ENCODE measurements at regions of chr1 and their contacts with region 1.

Region 1: DNA sequence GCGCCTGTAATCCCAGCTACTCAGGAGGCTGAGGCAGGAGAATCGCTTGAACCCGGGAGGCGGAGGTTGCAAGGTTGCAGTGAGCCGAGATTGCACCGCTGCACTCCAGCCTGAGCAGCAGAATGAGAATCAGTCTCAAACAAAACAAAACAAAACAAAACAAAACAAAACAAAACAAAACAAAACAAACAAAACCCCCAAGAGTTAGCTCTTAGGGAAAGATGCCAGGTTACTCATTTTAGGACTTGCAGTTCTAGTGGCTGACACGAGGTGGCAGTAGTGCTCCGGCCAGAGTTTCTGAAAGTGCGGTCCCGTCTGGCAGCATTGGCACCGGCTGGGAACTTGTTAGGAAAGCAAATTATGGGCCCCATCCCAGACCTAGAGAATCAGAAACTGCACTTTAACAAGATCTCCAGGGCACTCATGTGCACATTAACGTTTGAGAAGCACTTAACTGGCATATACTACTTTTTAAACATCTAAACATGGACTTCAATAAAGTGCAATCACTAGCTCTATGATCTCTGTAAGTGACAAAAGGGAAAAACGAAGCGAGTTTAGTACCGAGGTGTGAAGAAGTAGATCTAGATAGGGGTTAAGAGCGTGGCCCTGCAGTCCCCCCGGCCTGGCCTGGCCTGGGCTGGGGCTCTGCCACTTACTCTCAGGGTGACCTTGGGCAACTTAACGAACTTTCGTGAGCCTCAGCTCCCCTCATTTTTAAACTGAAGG is 41.9 kb upstream of the TNFRSF1B start:
- DNase-seq: peak; percentile 41 to 91
- H3K4me3 ChIP-seq: no peak overlapping the region
- H3K27ac ChIP-seq: no peak overlapping the region
- H3K4me1 ChIP-seq: no peaks in the 10 kb centered on the region
- H3K27me3 ChIP-seq: no peaks in the 10 kb centered on the region
- CTCF ChIP-seq: peak; percentile 78 to 97 (median 89)
- EP300 ChIP-seq: no peak
- POLR2A ChIP-seq: no peak
- RAD21 ChIP-seq: peak; percentile 96 to 97

Region 2: GRCh38 chr1:11581451-11581991 is 543.3 kb before region 1 on chr1:
- CTCF ChIA-PET with region 1: no interaction called
- POLR2A ChIA-PET with region 1: no interaction called
- DNase-seq: no peak
- H3K4me3 ChIP-seq: no peak overlapping the region
- H3K27ac ChIP-seq: no peak overlapping the region
- H3K4me1 ChIP-seq: no peaks in the 10 kb centered on the region
- H3K27me3 ChIP-seq: no peaks in the 10 kb centered on the region
- CTCF ChIP-seq: no peak
- EP300 ChIP-seq: no peak
- POLR2A ChIP-seq: no peak
- RAD21 ChIP-seq: no peak

Region 3: DNA sequence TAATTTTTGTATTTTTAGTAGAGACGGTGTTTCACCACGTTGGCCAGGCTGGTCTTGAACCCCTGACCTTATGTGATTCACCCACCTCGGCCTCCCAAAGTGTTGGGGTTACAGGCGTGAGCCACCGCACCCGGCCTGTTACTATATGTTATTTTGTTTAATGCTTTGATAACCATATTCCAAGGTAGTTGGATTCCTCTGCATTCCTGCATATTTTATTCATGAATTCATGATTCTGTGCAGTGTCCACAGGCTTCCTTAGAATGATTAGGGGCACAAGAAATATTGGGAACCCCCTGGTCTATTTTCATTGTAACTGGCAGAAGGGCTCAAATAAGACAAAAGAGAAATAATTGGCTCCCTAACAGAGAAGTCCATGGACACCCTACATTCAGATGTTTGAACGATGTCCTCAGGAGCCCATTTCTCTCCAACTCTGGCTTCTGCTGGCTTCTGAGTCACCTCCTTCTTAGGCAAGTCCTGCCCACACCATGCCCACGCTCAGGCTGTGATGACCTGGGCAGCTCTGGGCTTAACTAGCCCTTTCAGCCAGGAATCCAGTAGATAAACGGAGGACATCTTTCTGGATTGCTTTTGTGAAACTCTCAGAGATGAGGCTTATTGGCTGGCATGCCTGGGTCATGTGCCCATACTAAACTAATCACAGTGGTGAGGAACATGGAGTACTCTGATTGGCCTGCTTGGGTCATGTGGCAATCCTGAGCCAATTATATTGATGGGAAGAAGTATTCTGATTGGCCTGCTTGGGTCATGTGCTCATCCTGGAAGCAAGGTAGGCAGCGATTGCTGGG is 29.2 kb before region 1 on chr1:
- CTCF ChIA-PET with region 1: interaction called, 10 read pairs
- POLR2A ChIA-PET with region 1: no interaction called
- DNase-seq: no peak
- H3K4me3 ChIP-seq: no peak overlapping the region
- H3K27ac ChIP-seq: no peak overlapping the region
- H3K4me1 ChIP-seq: no peaks in the 10 kb centered on the region
- H3K27me3 ChIP-seq: no peaks in the 10 kb centered on the region
- CTCF ChIP-seq: no peak
- EP300 ChIP-seq: no peak
- POLR2A ChIP-seq: no peak
- RAD21 ChIP-seq: no peak

Region 4: GRCh38 chr1:12135612-12136011 is 10.8 kb after region 1 on chr1:
- CTCF ChIA-PET with region 1: interaction called, 66 read pairs
- POLR2A ChIA-PET with region 1: interaction called, 5 read pairs
- DNase-seq: no peak
- H3K4me3 ChIP-seq: no peak overlapping the region
- H3K27ac ChIP-seq: no peak overlapping the region
- H3K4me1 ChIP-seq: no peaks in the 10 kb centered on the region; a peak in 1 of 7 replicates
- H3K27me3 ChIP-seq: no peaks in the 10 kb centered on the region
- CTCF ChIP-seq: no peak
- EP300 ChIP-seq: no peak
- POLR2A ChIP-seq: no peak
- RAD21 ChIP-seq: no peak

Region 5: GRCh38 chr1:12161662-12162458 is 37.0 kb after region 1 on chr1:
- CTCF ChIA-PET with region 1: interaction called, 23 read pairs
- POLR2A ChIA-PET with region 1: interaction called, 3 read pairs
- DNase-seq: peak in 1 of 2 experiments; percentile 23
- H3K4me3 ChIP-seq: no peak overlapping the region
- H3K27ac ChIP-seq: no peak overlapping the region
- H3K4me1 ChIP-seq: peaks cover 0 to 7% (median 0%) of the 10 kb centered on the region in 4 experiments; a peak in 2 of 7 replicates
- H3K27me3 ChIP-seq: peaks cover 0 to 18% (median 13%) of the 10 kb centered on the region in 4 experiments; a peak in 6 of 7 replicates
- CTCF ChIP-seq: no peak
- EP300 ChIP-seq: no peak
- POLR2A ChIP-seq: no peak
- RAD21 ChIP-seq: no peak

Region 6: GRCh38 chr1:12184008-12184681 is 59.3 kb after region 1 on chr1:
- CTCF ChIA-PET with region 1: interaction called, 61 read pairs
- POLR2A ChIA-PET with region 1: no interaction called
- DNase-seq: no peak
- H3K4me3 ChIP-seq: no peak overlapping the region; a peak in 2 of 8 replicates
- H3K27ac ChIP-seq: no peak overlapping the region
- H3K4me1 ChIP-seq: peaks cover 0 to 11% (median 7%) of the 10 kb centered on the region in 4 experiments; a peak in 6 of 7 replicates
- H3K27me3 ChIP-seq: no peaks in the 10 kb centered on the region
- CTCF ChIP-seq: no peak
- EP300 ChIP-seq: no peak
- POLR2A ChIP-seq: no peak
- RAD21 ChIP-seq: no peak

Region 7: DNA sequence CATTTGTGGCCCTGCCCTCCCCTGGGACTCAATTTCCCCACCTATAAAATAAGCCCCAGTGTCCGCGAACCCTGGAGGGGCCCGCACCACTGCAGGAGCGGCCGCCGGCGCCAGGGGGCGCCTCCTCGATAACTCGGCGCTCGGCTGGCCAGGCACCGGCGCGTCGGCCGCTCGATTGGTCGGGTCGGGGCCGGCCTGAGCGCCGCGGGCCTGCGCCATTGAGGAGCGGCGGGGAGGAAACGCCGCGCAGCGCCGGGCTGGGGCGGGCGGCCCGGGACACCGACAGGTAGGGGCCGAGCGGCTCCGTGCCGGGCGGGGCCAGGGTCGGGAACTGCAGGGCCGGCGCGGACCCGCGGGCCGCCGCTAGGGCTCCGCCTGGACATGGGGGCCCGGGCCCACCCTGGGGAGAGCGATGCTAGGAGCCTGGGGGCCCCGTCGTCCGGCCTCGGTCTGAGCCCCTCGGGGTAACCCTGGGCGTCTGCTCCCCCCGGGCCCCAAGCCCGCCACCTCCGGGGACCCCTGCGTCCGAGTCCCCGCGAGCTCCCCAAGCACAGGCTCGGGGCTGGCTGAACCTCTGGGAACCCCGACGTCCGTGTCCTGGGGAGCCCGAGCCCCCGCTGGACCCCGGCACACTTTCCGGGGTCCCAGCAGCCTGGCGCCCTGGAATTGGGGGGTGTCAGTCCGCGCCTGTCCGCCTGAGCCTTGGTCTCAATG is 105.1 kb after region 1 on chr1 and contains the start of gene VPS13D:
- CTCF ChIA-PET with region 1: interaction called, 40 read pairs
- POLR2A ChIA-PET with region 1: no interaction called
- DNase-seq: peak; percentile 33 to 94
- H3K4me3 ChIP-seq: peak within 1 kb of the TSS; percentile 55 to 95 (median 66)
- H3K27ac ChIP-seq: no peak within 1 kb of the TSS
- H3K4me1 ChIP-seq: peaks cover 0 to 7% (median 3%) of the 10 kb centered on the region in 4 experiments; a peak in 4 of 7 replicates
- H3K27me3 ChIP-seq: no peaks in the 10 kb centered on the region; a peak in 1 of 7 replicates
- CTCF ChIP-seq: peak; percentile 83 to 92 (median 88)
- EP300 ChIP-seq: peak in 1 of 2 experiments; percentile 76; a peak in 1 of 3 replicates
- POLR2A ChIP-seq: no peak
- RAD21 ChIP-seq: no peak; a peak in 1 of 4 replicates
- total RNA-seq, gene VPS13D: 31.2 and 32.7 TPM in 2 replicates

Region 8: DNA sequence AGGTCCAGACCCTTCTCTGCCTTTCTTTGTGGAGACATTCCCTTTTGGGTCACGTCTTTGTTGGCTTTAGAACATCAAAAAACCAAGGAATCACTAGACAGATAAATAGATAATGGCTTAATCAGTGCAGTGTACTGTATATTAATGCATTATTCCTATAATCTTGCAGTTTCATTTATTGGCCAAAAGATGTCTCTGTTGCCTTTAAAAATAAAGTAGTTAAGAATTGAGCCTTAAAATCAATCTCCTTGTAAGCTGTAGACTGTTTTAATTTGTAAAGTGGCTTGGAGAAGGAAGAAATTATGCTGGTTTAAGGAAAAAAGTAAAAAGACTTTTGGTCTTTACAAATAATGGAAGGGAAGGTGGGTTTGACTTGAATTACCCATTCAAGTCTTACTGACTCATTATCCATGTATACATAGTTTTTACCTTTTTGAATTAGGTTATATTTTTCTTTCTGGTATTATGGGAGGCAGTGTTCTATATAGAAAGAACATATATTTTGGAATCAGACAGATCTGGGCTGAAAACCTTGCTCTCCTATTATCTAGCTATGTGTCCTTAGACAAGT is 189.6 kb after region 1 on chr1:
- CTCF ChIA-PET with region 1: no interaction called
- POLR2A ChIA-PET with region 1: no interaction called
- DNase-seq: no peak
- H3K4me3 ChIP-seq: no peak overlapping the region
- H3K27ac ChIP-seq: no peak overlapping the region
- H3K4me1 ChIP-seq: 0 out of 7 replicates have a peak, but pooled peaks cover 0 to 2% (median 0%) of the 10 kb centered on the region in 4 experiments
- H3K27me3 ChIP-seq: no peaks in the 10 kb centered on the region
- CTCF ChIP-seq: peak in 1 of 3 experiments; percentile 28; a peak in 1 of 4 replicates
- EP300 ChIP-seq: no peak
- POLR2A ChIP-seq: no peak
- RAD21 ChIP-seq: peak in 1 of 2 experiments; percentile 28; a peak in 3 of 4 replicates

Measured in H1 (cell line).